ENCODE measurements at regions of chr10 and their contacts with region 1.

Region 1: GRCh38 chr10:124741281-124741921 is 2.8 kb downstream of the FAM53B start:
- DNase-seq: peak; percentile 86
- ATAC-seq: peak; percentile 51
- H3K4me3 ChIP-seq: peak overlapping the region; percentile 66 to 92 (median 78)
- H3K4me3 Mint-ChIP-seq: peak overlapping the region; percentile 93
- H3K27ac ChIP-seq: peak overlapping the region; percentile 79 to 98
- H3K27ac Mint-ChIP-seq: peak overlapping the region; percentile 98
- H3K4me1 ChIP-seq: peaks cover 60 to 73% of the 10 kb centered on the region in 2 donors
- H3K4me1 Mint-ChIP-seq: peaks cover 73% of the 10 kb centered on the region
- H3K27me3 ChIP-seq: no peaks in the 10 kb centered on the region
- H3K27me3 Mint-ChIP-seq: no peaks in the 10 kb centered on the region
- CTCF ChIP-seq: peak; percentile 95

Region 2: DNA sequence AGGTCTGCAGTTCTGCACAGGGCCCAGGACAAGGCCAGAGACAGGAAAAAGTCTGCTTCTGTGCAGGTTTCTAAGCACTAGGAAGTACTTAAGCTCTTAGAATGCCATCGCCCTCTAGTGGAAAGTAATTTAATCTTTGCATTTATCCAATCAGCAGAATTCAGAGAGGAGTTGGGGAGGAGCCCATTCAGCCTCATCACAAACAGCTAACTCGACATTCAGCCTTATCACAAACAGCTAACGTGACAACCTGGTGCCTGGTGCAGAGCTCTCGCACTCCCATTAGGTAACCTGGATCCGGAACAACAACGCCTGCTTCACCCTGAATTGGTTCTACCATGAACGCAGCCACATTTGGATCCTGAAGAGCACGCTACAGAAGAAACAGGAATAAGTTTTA is 337.9 kb before region 1 on chr10:
- CTCF ChIA-PET with region 1: interaction called, 20 read pairs
- POLR2A ChIA-PET with region 1: no interaction called
- intact Hi-C with region 1: loop called (anchors 1 kb)
- DNase-seq: peak; percentile 83
- ATAC-seq: peak; percentile 99
- H3K4me3 ChIP-seq: no peak overlapping the region
- H3K4me3 Mint-ChIP-seq: no peak overlapping the region
- H3K27ac ChIP-seq: no peak overlapping the region
- H3K27ac Mint-ChIP-seq: peak overlapping the region; percentile 66
- H3K4me1 ChIP-seq: peaks cover 5 to 9% of the 10 kb centered on the region in 2 donors
- H3K4me1 Mint-ChIP-seq: peaks cover 9% of the 10 kb centered on the region
- H3K27me3 ChIP-seq: no peaks in the 10 kb centered on the region
- H3K27me3 Mint-ChIP-seq: no peaks in the 10 kb centered on the region
- CTCF ChIP-seq: peak; percentile 74

Region 3: DNA sequence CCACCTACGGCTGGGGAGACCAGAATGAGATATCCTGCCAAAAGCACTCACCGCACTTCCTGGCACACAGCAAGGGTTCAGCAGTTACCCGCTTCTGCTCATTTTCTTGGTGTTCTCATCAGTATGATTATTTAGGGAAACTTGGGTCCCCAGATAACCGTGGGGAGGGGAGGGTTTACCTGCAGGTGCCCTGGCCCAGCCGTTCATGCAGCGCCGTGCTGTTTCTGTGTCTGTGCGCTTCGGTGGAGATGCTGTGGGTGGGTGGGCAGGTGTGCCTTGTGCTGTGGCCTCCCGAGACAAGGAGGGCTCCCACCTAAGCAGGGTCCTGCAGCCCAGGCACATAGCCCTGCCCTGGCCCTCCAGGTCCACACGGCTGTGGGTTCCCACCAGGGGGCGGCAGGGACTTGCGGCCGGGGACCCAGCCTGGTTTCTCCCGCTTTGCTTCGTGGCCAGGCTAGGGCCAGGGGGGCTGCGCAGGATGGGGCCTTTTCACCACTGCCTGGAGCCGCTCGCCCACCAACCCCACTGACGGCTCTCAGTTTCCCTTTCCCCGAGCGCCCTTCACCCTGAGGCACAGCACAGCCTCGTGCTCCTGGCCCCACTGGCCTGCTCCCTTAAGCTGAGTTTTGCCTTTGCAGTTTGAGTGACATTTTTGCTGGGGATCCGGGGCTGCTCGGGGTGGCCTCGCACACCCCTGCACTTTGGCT is 201.3 kb before region 1 on chr10:
- CTCF ChIA-PET with region 1: interaction called, 415 read pairs
- POLR2A ChIA-PET with region 1: interaction called, 62 read pairs
- intact Hi-C with region 1: loop called (anchors 1 kb)
- DNase-seq: peak; percentile 89
- ATAC-seq: peak; percentile 71
- H3K4me3 ChIP-seq: no peak overlapping the region
- H3K4me3 Mint-ChIP-seq: peak overlapping the region; percentile 65
- H3K27ac ChIP-seq: peak overlapping the region; percentile 76 to 94
- H3K27ac Mint-ChIP-seq: peak overlapping the region; percentile 95
- H3K4me1 ChIP-seq: peaks cover 88 to 99% of the 10 kb centered on the region in 2 donors
- H3K4me1 Mint-ChIP-seq: peaks cover 90% of the 10 kb centered on the region
- H3K27me3 ChIP-seq: no peaks in the 10 kb centered on the region
- H3K27me3 Mint-ChIP-seq: no peaks in the 10 kb centered on the region
- CTCF ChIP-seq: peak; percentile 69

Region 4: GRCh38 chr10:124619195-124619594 is 122.2 kb before region 1 on chr10:
- CTCF ChIA-PET with region 1: interaction called, 91 read pairs
- POLR2A ChIA-PET with region 1: interaction called, 11 read pairs
- intact Hi-C with region 1: loop called (anchors 1 kb)
- DNase-seq: peak; percentile 84
- ATAC-seq: peak; percentile 75
- H3K4me3 ChIP-seq: peak overlapping the region in 4 of 5 experiments; percentile 19 to 55 (median 28)
- H3K4me3 Mint-ChIP-seq: peak overlapping the region; percentile 87
- H3K27ac ChIP-seq: peak overlapping the region; percentile 97 to 98
- H3K27ac Mint-ChIP-seq: peak overlapping the region; percentile 99
- H3K4me1 ChIP-seq: peaks cover 96 to 100% of the 10 kb centered on the region in 2 donors
- H3K4me1 Mint-ChIP-seq: peaks cover 93% of the 10 kb centered on the region
- H3K27me3 ChIP-seq: no peaks in the 10 kb centered on the region
- H3K27me3 Mint-ChIP-seq: no peaks in the 10 kb centered on the region
- CTCF ChIP-seq: no peak

Region 5: GRCh38 chr10:124657806-124658205 is 83.6 kb before region 1 on chr10:
- CTCF ChIA-PET with region 1: interaction called, 27 read pairs
- POLR2A ChIA-PET with region 1: no interaction called
- intact Hi-C with region 1: no loop called
- DNase-seq: peak; percentile 55
- ATAC-seq: peak; percentile 52
- H3K4me3 ChIP-seq: no peak overlapping the region
- H3K4me3 Mint-ChIP-seq: peak overlapping the region; percentile 47
- H3K27ac ChIP-seq: peak overlapping the region; percentile 44 to 65
- H3K27ac Mint-ChIP-seq: peak overlapping the region; percentile 87
- H3K4me1 ChIP-seq: peaks cover 75 to 84% of the 10 kb centered on the region in 2 donors
- H3K4me1 Mint-ChIP-seq: peaks cover 85% of the 10 kb centered on the region
- H3K27me3 ChIP-seq: no peaks in the 10 kb centered on the region
- H3K27me3 Mint-ChIP-seq: no peaks in the 10 kb centered on the region
- CTCF ChIP-seq: no peak

Region 6: DNA sequence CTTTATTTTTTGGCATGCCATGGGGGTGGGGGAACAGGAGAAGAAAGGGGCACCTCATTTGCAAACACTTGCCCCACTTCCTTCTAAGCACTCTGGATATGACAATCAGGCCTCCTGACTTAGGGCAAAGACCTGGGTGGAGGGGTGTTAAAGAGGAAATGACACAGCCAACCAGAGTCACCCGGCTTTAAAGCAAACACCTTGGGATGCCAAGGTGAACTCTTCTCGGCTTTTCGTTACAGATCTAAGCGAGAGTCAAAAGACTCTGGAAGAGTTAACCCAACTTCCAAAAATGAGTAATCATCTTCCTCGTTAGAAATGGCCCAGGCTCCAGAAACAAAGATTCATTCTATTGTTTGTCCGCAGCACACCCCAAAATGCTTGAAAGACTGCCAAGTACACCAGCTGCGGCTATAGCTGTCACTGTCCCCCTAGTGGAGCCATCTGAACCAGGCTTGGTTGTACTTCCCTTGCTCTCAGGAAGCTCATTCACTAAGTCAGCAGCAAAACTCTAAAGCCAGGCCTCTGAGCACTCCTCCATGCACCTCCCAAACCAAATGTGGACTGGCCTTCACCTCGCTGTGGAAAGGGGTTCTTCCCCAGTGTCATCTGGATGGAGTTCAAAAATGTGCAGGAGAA is 22.1 kb before region 1 on chr10:
- CTCF ChIA-PET with region 1: interaction called, 353 read pairs
- POLR2A ChIA-PET with region 1: interaction called, 51 read pairs
- intact Hi-C with region 1: loop called (anchors 1 kb)
- DNase-seq: peak; percentile 90
- ATAC-seq: peak; percentile 48
- H3K4me3 ChIP-seq: peak overlapping the region in 3 of 5 experiments; percentile 17 to 37 (median 33)
- H3K4me3 Mint-ChIP-seq: peak overlapping the region; percentile 82
- H3K27ac ChIP-seq: peak overlapping the region; percentile 92 to 98
- H3K27ac Mint-ChIP-seq: peak overlapping the region; percentile 85
- H3K4me1 ChIP-seq: peaks cover 97% of the 10 kb centered on the region in 2 donors
- H3K4me1 Mint-ChIP-seq: peaks cover 91% of the 10 kb centered on the region
- H3K27me3 ChIP-seq: no peaks in the 10 kb centered on the region
- H3K27me3 Mint-ChIP-seq: no peaks in the 10 kb centered on the region
- CTCF ChIP-seq: peak; percentile 77

Measured in B cell (primary cell).